Right ventricle myocardium inferior (tissue), 1 donor: ENCODE measurements at regions of chr2 and their contacts with region 1.

Region 1: GRCh38 chr2:165401285-165401852 is 68.1 kb upstream of the CSRNP3 start:
- DNase-seq: no peak
- ATAC-seq: no peak

Region 2: GRCh38 chr2:165697748-165698443 is 296.5 kb after region 1 on chr2:
- intact Hi-C with region 1: loop called (anchors 1 kb)
- DNase-seq: no peak
- ATAC-seq: no peak

Region 3: GRCh38 chr2:165874445-165875039 is 473.2 kb after region 1 on chr2:
- intact Hi-C with region 1: loop called (anchors 2 kb)
- DNase-seq: no peak
- ATAC-seq: no peak